HEK293 (cell line): ENCODE measurements at regions of chr1 and their contacts with region 1.

Region 1: DNA sequence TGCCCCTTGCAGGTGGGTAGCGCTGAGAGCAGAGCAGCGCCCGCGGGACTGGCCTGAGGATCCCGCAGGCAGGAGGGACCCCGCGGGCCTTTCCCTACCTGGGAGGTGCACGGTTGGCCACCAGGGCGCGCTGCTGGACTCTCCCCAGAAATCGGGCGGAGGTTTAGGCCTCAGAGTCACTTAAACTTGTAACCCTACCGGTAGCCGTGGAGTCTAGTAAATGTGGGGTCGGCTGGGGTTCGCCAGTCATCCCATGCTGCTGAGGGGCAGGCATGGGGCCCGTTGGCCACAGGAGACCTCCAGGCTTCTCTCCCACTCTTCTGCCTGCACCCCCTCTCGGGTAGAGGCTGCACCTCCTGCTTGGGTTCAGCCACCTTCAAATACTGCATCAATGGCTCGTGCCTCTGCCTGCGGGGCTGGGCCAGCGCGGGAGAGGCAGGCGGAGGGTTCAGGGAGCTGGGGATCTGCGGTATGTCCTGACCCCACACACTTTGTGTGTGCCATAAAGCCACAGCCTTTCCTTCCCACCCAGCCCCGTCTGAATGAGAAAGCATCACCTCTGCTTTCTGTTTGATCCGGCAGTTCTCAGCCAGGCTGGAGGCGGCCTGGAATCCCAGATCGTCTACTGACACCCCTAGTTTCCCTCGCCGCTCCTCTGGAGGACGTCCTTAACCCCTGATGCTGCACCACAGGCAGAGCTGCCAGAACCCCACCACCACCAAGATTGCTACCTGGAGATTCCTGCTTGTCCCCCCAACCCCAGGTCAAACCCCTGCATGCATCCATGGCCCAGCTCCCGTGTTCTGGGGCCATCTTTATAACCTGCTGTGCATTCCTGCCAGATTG is 12.3 kb upstream of the GSTM4 start:
- H3K4me3 ChIP-seq: no peak overlapping the region
- H3K27ac ChIP-seq: no peak overlapping the region
- H3K4me1 ChIP-seq: no peaks in the 10 kb centered on the region
- CTCF ChIP-seq: peak; percentile 89

Region 2: GRCh38 chr1:109630081-109630897 is 13.3 kb before region 1 on chr1:
- CTCF ChIA-PET with region 1: interaction called, 34 read pairs
- POLR2A ChIA-PET with region 1: no interaction called
- H3K4me3 ChIP-seq: no peak overlapping the region
- H3K27ac ChIP-seq: no peak overlapping the region
- H3K4me1 ChIP-seq: no peaks in the 10 kb centered on the region
- CTCF ChIP-seq: no peak

Region 3: GRCh38 chr1:109704173-109704572 is 60.6 kb after region 1 on chr1:
- CTCF ChIA-PET with region 1: interaction called, 14 read pairs
- POLR2A ChIA-PET with region 1: no interaction called
- H3K4me3 ChIP-seq: no peak overlapping the region
- H3K27ac ChIP-seq: no peak overlapping the region
- H3K4me1 ChIP-seq: no peaks in the 10 kb centered on the region
- CTCF ChIP-seq: no peak

Region 4: DNA sequence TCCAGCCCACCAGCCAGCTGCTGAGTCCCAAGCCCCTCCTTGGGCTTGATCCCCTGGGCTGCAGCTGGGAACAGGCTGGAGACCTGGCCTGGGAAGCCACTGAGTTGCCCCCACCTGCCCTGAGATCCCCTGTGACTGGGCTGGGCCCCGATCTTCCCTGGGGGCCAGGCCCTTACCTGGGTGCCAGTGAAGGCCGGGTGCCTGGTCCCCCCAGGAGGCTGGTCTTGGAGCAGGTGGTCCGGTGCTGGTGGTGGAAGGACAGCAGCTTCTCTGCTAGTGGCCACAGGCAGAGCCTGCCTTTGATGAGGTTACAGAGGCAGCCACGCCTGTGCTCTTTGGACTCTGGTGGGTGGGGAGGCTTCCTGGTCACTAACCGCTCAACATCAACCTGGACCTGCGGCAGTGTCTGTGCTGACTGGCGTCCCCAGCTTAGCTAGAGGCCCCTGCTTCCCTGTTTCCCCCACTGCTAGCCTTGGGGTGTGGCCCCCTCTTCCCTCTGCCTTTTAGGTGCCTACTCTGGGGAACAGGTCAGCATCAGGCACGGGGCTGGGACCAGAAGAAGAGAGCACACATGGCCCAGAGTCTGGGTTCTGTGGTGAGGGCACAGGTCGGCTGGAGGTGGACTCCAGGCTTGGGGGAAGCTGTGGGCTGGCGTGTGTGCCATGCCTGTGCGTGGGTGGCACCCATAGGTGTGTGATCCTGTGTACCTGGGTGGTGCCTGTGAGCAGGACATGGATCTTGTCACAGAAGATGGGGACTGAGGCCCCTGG is 120.2 kb after region 1 on chr1 and contains the start of gene EPS8L3:
- CTCF ChIA-PET with region 1: interaction called, 345 read pairs
- POLR2A ChIA-PET with region 1: no interaction called
- H3K4me3 ChIP-seq: no peak within 1 kb of the TSS
- H3K27ac ChIP-seq: no peak within 1 kb of the TSS
- H3K4me1 ChIP-seq: no peaks in the 10 kb centered on the region
- CTCF ChIP-seq: no peak

Region 5: GRCh38 chr1:109975718-109976117 is 332.1 kb after region 1 on chr1:
- CTCF ChIA-PET with region 1: interaction called, 87 read pairs
- POLR2A ChIA-PET with region 1: no interaction called
- H3K4me3 ChIP-seq: no peak overlapping the region
- H3K27ac ChIP-seq: no peak overlapping the region
- H3K4me1 ChIP-seq: no peaks in the 10 kb centered on the region
- CTCF ChIP-seq: no peak